Caco-2 (cell line): ENCODE measurements at regions of chr21 and their contacts with region 1.

Region 1: DNA sequence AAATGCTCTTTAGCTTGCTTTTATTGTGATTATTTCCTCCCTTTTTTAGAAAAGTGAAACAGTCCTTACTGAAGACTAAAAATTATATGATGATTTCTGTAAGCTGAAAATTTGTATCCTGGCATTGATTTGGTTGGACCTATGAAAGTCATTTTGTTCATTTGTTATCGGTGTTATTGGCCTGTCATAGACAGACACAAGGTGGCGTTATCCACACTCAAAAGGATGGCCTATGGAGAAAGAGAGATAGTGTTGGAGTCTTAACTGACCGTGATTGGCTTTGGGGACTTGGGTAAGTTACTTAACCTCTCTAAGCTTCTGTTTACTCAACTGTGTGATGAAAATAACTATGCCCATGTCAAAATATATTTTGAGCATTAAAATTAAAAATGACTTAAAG is 203.6 kb upstream of the CHODL start:
- DNase-seq: peak; percentile 31 to 37
- H3K4me3 ChIP-seq: no peak overlapping the region
- H3K4me3 Mint-ChIP-seq: no peak overlapping the region
- H3K27ac Mint-ChIP-seq: no peak overlapping the region
- H3K4me1 ChIP-seq: no peaks in the 10 kb centered on the region
- H3K4me1 Mint-ChIP-seq: no peaks in the 10 kb centered on the region
- H3K27me3 ChIP-seq: no peaks in the 10 kb centered on the region
- H3K27me3 Mint-ChIP-seq: no peaks in the 10 kb centered on the region
- CTCF ChIP-seq: peak; percentile 37 to 70

Region 2: GRCh38 chr21:18164933-18165332 is 123.9 kb after region 1 on chr21:
- CTCF ChIA-PET with region 1: no interaction called
- POLR2A ChIA-PET with region 1: no interaction called
- intact Hi-C with region 1: loop called (anchors 10 kb)
- DNase-seq: no peak
- H3K4me3 ChIP-seq: no peak overlapping the region
- H3K4me3 Mint-ChIP-seq: no peak overlapping the region
- H3K27ac Mint-ChIP-seq: no peak overlapping the region
- H3K4me1 ChIP-seq: no peaks in the 10 kb centered on the region
- H3K4me1 Mint-ChIP-seq: no peaks in the 10 kb centered on the region
- H3K27me3 ChIP-seq: no peaks in the 10 kb centered on the region
- H3K27me3 Mint-ChIP-seq: peaks cover 7% of the 10 kb centered on the region
- CTCF ChIP-seq: no peak

Region 3: GRCh38 chr21:18369115-18369514 is 328.1 kb after region 1 on chr21:
- CTCF ChIA-PET with region 1: no interaction called
- POLR2A ChIA-PET with region 1: no interaction called
- intact Hi-C with region 1: loop called (anchors 2 kb)
- DNase-seq: peak in 1 of 2 experiments; percentile 9
- H3K4me3 ChIP-seq: no peak overlapping the region
- H3K4me3 Mint-ChIP-seq: no peak overlapping the region
- H3K27ac Mint-ChIP-seq: no peak overlapping the region
- H3K4me1 ChIP-seq: no peaks in the 10 kb centered on the region
- H3K4me1 Mint-ChIP-seq: no peaks in the 10 kb centered on the region
- H3K27me3 ChIP-seq: no peaks in the 10 kb centered on the region
- H3K27me3 Mint-ChIP-seq: peaks cover 4% of the 10 kb centered on the region
- CTCF ChIP-seq: peak in 1 of 2 experiments; percentile 54